Heart left ventricle (tissue), 16 donors: ENCODE measurements at regions of chr10 and their contacts with region 1.

Region 1: DNA sequence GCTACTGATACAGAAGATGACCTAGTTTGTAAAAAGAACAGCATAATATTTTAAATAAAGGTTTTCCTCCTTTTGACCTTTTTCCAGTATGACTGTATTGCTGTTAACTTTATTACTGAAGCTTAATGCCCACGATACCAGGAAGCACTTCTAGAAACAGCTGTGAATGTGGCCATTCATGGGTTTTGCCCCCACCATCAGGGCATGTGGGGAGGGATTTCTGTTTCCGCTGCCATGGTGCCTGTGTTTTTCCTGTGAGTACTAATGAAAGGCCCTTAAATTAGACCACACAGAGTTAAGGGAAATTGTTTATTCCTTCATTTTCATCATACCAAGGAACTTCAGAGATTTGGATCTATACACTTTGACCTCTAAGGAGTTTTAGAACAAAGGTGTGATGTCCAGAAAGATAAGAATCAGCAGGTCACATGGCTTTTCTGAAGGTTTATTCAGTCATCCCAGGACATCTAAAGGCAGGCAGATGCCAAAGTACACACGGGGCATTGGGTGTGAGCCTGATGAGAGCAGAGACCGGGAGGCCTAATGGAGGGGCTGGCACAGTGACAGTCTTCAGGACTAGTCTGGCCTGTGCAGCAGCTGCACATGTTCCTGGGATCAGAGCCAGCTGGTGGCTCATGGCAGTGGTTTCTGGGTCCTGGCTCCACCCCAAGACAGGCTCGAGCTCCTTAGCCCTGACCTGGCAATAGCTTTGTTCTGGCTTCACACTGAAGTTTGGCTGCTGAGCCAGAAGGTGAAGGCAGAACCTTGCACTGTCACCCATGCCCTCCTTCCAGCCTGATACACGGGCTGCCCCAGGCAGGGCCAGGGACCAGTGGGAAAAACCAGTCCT is 190.9 kb downstream of the REEP3 start:
- DNase-seq: peak; percentile 93 to 98 (median 94)
- ATAC-seq: peak; percentile 93 to 95 (median 94)
- H3K4me3 ChIP-seq: no peak overlapping the region
- H3K27ac ChIP-seq: peak overlapping the region; percentile 79 to 86 (median 83)
- H3K4me1 ChIP-seq: peaks cover 15 to 66% (median 43%) of the 10 kb centered on the region in 12 donors
- H3K27me3 ChIP-seq: no peaks in the 10 kb centered on the region
- CTCF ChIP-seq: no peak
- POLR2A ChIP-seq: no peak

Region 2: GRCh38 chr10:63268798-63269503 is 443.1 kb before region 1 on chr10:
- intact Hi-C with region 1: loop called in 3 of 10 experiments (anchors 5 kb)
- DNase-seq: peak in 4 of 5 donors; percentile 87 to 88 (median 88)
- ATAC-seq: peak; percentile 96 to 99 (median 98)
- H3K4me3 ChIP-seq: peak overlapping the region; percentile 30 to 68 (median 58)
- H3K27ac ChIP-seq: peak overlapping the region; percentile 84 to 96 (median 88)
- H3K4me1 ChIP-seq: peaks cover 4 to 38% (median 19%) of the 10 kb centered on the region in 12 donors
- H3K27me3 ChIP-seq: no peaks in the 10 kb centered on the region
- CTCF ChIP-seq: peak in 10 of 12 donors; percentile 13 to 49 (median 38)
- POLR2A ChIP-seq: peak in 1 of 2 donors; percentile 94

Region 3: GRCh38 chr10:63365976-63366765 is 345.9 kb before region 1 on chr10:
- intact Hi-C with region 1: loop called in 1 of 10 experiments (anchors 10 kb)
- DNase-seq: no peak
- ATAC-seq: no peak
- H3K4me3 ChIP-seq: no peak overlapping the region
- H3K27ac ChIP-seq: no peak overlapping the region
- H3K4me1 ChIP-seq: peaks cover 0 to 25% (median 0%) of the 10 kb centered on the region in 12 donors
- H3K27me3 ChIP-seq: no peaks in the 10 kb centered on the region
- CTCF ChIP-seq: no peak
- POLR2A ChIP-seq: no peak

Region 4: DNA sequence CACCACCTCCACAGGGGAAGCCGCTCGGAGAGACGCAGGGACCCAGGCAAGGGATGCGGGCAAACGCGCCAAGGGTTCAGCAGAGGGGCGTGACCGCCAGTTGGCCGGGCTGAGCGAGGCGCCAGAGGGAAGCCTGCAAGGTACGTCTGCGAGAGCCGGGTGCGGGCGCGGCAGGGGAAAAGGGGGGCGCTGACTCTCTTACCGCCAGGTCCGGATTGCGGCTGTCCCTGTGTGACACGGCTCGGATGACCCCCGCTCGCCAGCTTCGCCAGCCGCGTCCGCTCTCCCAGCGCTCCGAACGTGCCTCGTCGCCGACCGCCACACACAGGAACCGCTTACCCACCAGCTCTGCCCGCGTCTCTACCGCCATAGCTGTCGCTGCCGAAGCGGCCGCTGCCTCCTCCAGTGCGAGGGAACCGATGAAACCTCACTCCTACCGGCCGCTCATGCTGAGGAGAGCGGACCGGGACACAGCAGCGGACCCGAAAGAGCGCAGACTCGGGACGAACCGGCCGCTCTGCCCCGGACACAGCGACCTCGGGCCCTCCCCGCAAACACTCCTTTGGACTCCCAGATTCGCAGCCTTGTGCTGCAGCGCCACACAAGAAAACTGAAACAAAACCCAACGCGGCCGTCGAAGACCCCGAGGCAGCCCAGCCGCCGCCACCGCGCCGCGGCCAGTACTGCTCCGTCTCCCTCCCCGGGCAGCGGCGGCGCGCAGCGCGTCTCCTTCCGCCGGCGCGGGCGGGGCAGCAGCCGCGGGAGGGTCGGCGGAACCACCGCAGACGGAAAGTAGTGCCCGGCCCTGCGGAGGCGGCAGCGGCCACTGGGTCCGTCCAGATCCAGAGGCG is 246.6 kb before region 1 on chr10 and contains the start of gene JMJD1C:
- intact Hi-C with region 1: loop called in 3 of 10 experiments (anchors 5 to 10 kb)
- DNase-seq: peak; percentile 84 to 91 (median 86)
- ATAC-seq: peak; percentile 69 to 94 (median 90)
- H3K4me3 ChIP-seq: peak within 1 kb of the TSS; percentile 65 to 93 (median 86)
- H3K27ac ChIP-seq: peak within 1 kb of the TSS; percentile 87 to 96 (median 92)
- H3K4me1 ChIP-seq: peaks cover 0 to 40% (median 18%) of the 10 kb centered on the region in 12 donors
- H3K27me3 ChIP-seq: no peaks in the 10 kb centered on the region
- CTCF ChIP-seq: peak in 2 of 12 donors; percentile 7 to 40
- POLR2A ChIP-seq: peak in 1 of 2 donors; percentile 60
- total RNA-seq, gene JMJD1C: 27.0 to 54.6 (median 42.7) TPM

Region 5: GRCh38 chr10:63521416-63522276 is 190.4 kb before region 1 on chr10:
- intact Hi-C with region 1: loop called in 5 of 10 experiments (anchors 2 to 10 kb)
- DNase-seq: peak; percentile 69 to 88 (median 76)
- ATAC-seq: peak; percentile 15 to 91 (median 82)
- H3K4me3 ChIP-seq: peak overlapping the region; percentile 63 to 91 (median 78)
- H3K27ac ChIP-seq: peak overlapping the region; percentile 97 to 99 (median 98)
- H3K4me1 ChIP-seq: peaks cover 4 to 64% (median 49%) of the 10 kb centered on the region in 12 donors
- H3K27me3 ChIP-seq: no peaks in the 10 kb centered on the region
- CTCF ChIP-seq: no peak
- POLR2A ChIP-seq: peak in 1 of 2 donors; percentile 35

Region 6: GRCh38 chr10:63666836-63667383 is 45.2 kb before region 1 on chr10:
- intact Hi-C with region 1: loop called in 8 of 10 experiments (anchors 2 to 5 kb)
- DNase-seq: no peak
- ATAC-seq: no peak
- H3K4me3 ChIP-seq: no peak overlapping the region
- H3K27ac ChIP-seq: peak overlapping the region in 11 of 12 donors; percentile 9 to 59 (median 40)
- H3K4me1 ChIP-seq: peaks cover 3 to 44% (median 24%) of the 10 kb centered on the region in 12 donors
- H3K27me3 ChIP-seq: no peaks in the 10 kb centered on the region
- CTCF ChIP-seq: no peak
- POLR2A ChIP-seq: no peak

Region 7: DNA sequence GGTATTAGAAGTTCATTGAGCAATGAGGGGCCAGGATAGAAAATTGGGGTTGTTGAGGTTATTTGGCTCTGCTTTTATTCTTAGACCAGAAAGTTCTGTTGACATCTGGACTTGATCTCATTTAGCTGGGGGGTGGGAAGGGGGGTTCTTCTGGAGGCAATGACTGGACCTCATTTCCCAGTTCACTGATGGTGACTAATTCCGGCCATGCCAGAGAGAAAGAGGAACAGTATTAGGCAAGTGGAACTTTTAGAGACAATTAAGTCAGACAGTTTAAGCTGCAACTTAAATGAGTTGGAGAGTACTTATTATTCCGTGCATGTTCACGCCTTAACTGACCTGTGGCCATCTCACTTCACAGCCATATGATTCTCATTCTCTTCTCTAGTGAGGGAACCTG is 321.6 kb after region 1 on chr10:
- intact Hi-C with region 1: no loop called
- DNase-seq: no peak
- ATAC-seq: peak in 1 of 4 donors; percentile 38
- H3K4me3 ChIP-seq: no peak overlapping the region
- H3K27ac ChIP-seq: no peak overlapping the region
- H3K4me1 ChIP-seq: peaks cover 0 to 13% (median 2%) of the 10 kb centered on the region in 12 donors
- H3K27me3 ChIP-seq: peaks cover 0 to 8% (median 0%) of the 10 kb centered on the region in 9 donors
- CTCF ChIP-seq: no peak
- POLR2A ChIP-seq: no peak